A673 (cell line): ENCODE measurements at regions of chr7 and their contacts with region 1.

Region 1: DNA sequence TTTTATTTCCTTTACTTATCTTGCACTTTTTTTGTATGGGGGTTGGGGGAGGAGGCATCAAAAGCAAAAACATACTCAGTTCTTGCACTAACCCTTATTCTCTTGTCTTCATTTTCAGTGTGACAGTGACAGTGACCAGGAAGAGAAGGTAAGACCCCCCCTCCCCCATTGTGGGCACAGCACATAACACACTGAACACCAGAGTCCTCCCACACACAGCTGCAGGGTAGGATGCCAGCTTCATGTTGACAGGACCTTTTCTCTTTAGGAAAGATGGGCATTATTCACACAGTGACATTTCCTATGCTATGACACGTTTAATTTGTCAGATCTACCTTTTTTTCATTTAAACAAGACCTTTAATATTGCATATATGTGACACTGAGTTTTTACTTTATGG is 696.3 kb upstream of the GALNT17 start:
- DNase-seq: no peak
- H3K4me3 ChIP-seq: no peak overlapping the region
- H3K27ac ChIP-seq: no peak overlapping the region
- H3K4me1 ChIP-seq: no peaks in the 10 kb centered on the region
- H3K27me3 ChIP-seq: no peaks in the 10 kb centered on the region
- CTCF ChIP-seq: no peak

Region 2: GRCh38 chr7:70384891-70385290 is 50.7 kb before region 1 on chr7:
- CTCF ChIA-PET with region 1: no interaction called
- POLR2A ChIA-PET with region 1: no interaction called
- intact Hi-C with region 1: loop called (anchors 5 kb)
- DNase-seq: no peak
- H3K4me3 ChIP-seq: no peak overlapping the region
- H3K27ac ChIP-seq: no peak overlapping the region
- H3K4me1 ChIP-seq: no peaks in the 10 kb centered on the region
- H3K27me3 ChIP-seq: no peaks in the 10 kb centered on the region
- CTCF ChIP-seq: no peak

Region 3: GRCh38 chr7:70498232-70498992 is 62.8 kb after region 1 on chr7:
- CTCF ChIA-PET with region 1: no interaction called
- POLR2A ChIA-PET with region 1: no interaction called
- intact Hi-C with region 1: no loop called
- DNase-seq: peak; percentile 63
- H3K4me3 ChIP-seq: no peak overlapping the region
- H3K27ac ChIP-seq: no peak overlapping the region
- H3K4me1 ChIP-seq: peaks cover 7% of the 10 kb centered on the region
- H3K27me3 ChIP-seq: peaks cover 6% of the 10 kb centered on the region
- CTCF ChIP-seq: no peak

Region 4: GRCh38 chr7:70614237-70615045 is 178.8 kb after region 1 on chr7:
- CTCF ChIA-PET with region 1: no interaction called
- POLR2A ChIA-PET with region 1: no interaction called
- intact Hi-C with region 1: no loop called
- DNase-seq: peak; percentile 74
- H3K4me3 ChIP-seq: no peak overlapping the region
- H3K27ac ChIP-seq: no peak overlapping the region
- H3K4me1 ChIP-seq: peaks cover 11% of the 10 kb centered on the region
- H3K27me3 ChIP-seq: no peaks in the 10 kb centered on the region
- CTCF ChIP-seq: no peak